Right cardiac atrium (tissue), 5 donors: ENCODE measurements at regions of chr22 and their contacts with region 1.

Region 1: DNA sequence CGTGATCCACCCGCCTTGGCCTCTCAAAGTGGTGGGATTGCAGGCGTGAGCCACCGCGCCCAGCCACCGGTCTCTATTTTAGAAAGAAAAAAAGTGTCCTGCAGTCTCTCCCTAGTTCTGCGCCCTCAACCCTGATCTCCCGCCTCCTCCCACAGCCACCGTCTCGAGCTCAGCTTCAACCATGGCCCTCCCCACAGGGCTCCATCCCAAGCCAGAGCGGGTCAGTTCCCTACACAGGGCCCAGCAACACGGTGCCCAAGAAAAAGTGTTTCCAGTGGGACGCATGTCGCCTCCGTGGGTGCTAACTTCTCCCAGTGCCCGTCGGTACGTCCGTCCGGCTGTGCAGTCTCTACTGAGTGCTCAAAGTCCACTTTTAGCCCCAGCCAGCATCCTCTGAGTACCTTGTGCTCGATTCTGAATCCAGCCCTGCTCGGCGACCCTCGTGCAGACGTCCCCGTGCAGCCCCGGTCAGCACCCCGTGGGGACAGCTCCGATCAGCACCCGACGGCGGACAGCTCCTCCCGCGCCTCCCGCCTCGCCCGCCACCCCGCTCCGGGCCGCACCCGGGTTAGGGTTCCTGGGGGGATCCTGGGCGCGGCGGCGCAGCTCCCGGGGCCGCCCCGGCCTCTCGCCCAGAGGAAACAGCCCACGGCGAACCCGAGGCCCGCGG is 672 bp upstream of the MAPK8IP2 start:
- DNase-seq: peak; percentile 57 to 87 (median 84)
- ATAC-seq: peak; percentile 66 to 77
- H3K4me3 ChIP-seq: peak overlapping the region; percentile 78
- H3K27ac ChIP-seq: no peak overlapping the region
- H3K4me1 ChIP-seq: no peaks in the 10 kb centered on the region
- H3K27me3 ChIP-seq: no peaks in the 10 kb centered on the region

Region 2: DNA sequence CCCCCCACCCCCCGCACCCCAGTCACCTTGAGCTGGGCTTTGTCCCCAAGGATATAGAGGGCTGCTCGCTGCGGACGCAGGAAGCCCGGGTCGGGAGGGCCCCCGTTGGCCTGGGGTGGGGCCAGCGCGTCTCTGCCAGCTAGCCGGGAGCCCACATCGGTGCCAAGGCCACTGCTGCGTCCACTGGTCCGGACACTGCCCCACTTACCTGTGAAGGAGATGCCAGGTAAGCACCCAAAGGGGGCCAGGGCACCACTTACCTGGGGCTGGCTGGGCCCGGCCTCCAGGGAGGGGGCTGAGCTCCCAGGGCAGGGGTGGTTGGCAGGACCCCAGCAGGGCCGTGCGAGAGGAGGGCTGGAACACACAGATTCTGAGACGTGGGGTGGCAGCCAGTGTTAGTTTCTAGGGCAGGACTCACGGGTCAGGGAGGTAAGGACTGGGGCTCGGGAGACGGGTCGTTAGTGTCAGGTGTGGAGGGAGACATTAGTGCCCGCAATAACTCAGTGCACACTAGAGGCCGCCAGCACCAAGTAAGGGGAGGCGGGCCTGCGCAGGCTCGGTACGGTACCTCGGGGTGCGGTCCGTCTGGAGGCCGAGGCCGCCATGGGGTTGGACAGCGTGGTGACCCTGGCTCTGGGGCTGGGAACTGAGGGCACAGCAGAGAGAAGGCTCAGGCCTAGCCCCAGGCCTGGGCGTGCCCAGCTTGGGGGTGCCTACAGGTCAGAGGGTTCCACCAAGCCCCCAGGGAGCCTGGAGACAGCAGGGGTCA is 143.3 kb before region 1 on chr22:
- intact Hi-C with region 1: no loop called
- DNase-seq: no peak
- ATAC-seq: no peak
- H3K4me3 ChIP-seq: no peak overlapping the region
- H3K27ac ChIP-seq: no peak overlapping the region
- H3K4me1 ChIP-seq: no peaks in the 10 kb centered on the region
- H3K27me3 ChIP-seq: no peaks in the 10 kb centered on the region

Region 3: GRCh38 chr22:50498322-50498890 is 101.5 kb before region 1 on chr22:
- intact Hi-C with region 1: loop called in 1 of 4 experiments (anchors 10 kb)
- DNase-seq: peak; percentile 49 to 67 (median 63)
- ATAC-seq: peak; percentile 73 to 79
- H3K4me3 ChIP-seq: no peak overlapping the region
- H3K27ac ChIP-seq: no peak overlapping the region
- H3K4me1 ChIP-seq: no peaks in the 10 kb centered on the region
- H3K27me3 ChIP-seq: no peaks in the 10 kb centered on the region

Region 4: DNA sequence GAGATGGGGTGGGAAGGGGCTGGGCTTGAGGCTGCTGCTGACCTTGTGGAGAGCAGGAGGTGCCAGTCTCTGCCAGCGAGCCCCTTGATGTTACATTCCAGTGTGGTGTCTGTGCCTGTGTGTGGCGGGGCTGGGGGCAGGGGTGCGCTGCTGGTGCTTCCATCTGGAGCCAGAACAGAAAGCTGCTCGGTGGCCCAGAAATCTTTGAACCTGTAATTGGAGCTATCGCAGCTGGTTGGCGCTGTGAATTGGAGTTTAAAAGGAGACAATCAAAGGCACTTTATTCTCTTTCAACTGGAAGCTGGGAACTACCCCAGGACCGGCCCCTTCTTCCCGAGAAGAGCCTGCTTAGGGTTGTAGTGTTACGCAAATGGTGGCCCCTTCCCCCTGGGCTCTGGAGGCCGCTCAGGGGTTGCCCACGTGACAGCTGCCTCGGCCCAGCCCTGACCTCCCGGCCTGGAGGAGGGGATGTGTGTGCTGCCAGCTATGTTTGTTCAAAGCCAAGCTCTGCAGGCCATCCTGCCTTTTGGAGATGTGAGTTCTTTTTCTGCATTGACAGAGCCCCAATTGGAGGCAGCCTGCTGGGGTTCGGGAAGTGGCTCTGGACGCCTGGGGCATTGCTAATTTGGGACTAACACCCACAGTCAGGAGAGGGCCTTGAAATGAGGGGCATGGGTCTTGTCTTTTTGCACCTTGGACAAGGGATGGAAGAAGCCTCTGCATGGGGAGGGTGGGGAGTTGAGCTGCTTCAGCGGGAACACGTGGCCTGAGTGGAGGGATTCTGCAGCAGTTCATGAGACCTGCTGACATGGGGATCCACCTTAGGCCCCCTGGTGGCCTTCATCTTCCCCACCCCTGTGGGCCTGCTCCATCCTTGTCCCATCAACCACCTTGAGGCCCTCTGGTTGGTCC is 42.0 kb after region 1 on chr22:
- intact Hi-C with region 1: no loop called
- DNase-seq: peak; percentile 40 to 83 (median 81)
- ATAC-seq: peak; percentile 85 to 86
- H3K4me3 ChIP-seq: no peak overlapping the region
- H3K27ac ChIP-seq: peak overlapping the region; percentile 85
- H3K4me1 ChIP-seq: peaks cover 11% of the 10 kb centered on the region
- H3K27me3 ChIP-seq: no peaks in the 10 kb centered on the region